Activated CD8-positive, alpha-beta T cell treated with anti-CD3 and anti-CD28 coated beads, Interleukin-2, amount 10 ng/mL, durations not matched to agents 7 days and 5 days (primary cell): ENCODE measurements at regions of chr1 and their contacts with region 1.

Region 1: DNA sequence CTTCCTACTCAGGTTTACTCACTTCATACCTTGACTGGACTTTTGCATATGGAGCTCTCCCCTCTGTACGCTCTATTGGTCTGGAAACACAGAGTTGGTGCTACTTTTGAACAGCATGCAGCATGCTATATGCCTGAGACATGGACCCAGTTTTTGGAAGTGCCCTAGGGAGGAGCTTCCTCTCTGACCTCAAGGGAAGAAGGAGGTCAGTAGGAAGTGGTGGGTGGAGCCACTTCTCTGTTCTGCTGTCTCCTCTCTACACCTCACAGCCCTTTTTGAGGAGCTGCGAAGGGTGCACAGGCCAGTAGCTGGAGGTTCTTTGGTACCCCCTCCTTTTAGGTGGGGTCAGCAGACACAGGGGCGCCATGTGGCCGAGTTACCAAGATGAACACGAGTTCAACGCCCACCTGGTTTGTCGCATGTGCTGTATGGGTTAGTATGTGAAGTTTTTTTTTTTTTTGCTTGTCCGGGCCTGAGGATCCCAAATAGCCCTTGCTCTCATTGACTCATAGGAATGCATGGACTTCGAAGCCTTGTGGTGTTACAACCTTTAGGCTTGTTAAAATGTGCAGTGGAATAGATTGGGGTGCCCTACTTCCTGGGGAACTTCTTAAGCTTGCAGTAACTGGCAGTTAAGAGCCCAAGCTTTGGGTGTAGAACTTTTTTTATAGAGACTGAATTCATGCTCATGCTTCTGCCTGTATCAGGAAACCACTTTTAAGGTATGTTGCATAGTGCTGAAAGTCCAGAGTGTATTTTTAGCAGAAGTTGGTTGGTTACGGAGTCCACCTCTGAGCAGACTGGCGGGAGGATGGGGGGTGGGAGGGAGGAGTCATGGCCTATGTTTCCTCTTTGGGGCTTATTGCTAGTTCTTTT is 10.7 kb downstream of the MACF1 start:
- DNase-seq: peak; percentile 69
- ATAC-seq: peak; percentile 78
- H3K4me3 Mint-ChIP-seq: peak overlapping the region; percentile 89
- H3K27ac Mint-ChIP-seq: peak overlapping the region; percentile 90
- H3K4me1 Mint-ChIP-seq: peaks cover 51% of the 10 kb centered on the region
- H3K27me3 Mint-ChIP-seq: no peaks in the 10 kb centered on the region

Region 2: GRCh38 chr1:39204441-39205081 is 10.7 kb before region 1 on chr1 and contains the start of gene MACF1:
- CTCF ChIA-PET with region 1: interaction called, 89 read pairs
- POLR2A ChIA-PET with region 1: interaction called, 117 read pairs
- DNase-seq: peak; percentile 58
- ATAC-seq: peak; percentile 61
- H3K4me3 Mint-ChIP-seq: peak within 1 kb of the TSS; percentile 93
- H3K27ac Mint-ChIP-seq: peak within 1 kb of the TSS; percentile 93
- H3K4me1 Mint-ChIP-seq: peaks cover 53% of the 10 kb centered on the region
- H3K27me3 Mint-ChIP-seq: no peaks in the 10 kb centered on the region
- total RNA-seq, gene MACF1: 353 to 366 TPM

Region 3: DNA sequence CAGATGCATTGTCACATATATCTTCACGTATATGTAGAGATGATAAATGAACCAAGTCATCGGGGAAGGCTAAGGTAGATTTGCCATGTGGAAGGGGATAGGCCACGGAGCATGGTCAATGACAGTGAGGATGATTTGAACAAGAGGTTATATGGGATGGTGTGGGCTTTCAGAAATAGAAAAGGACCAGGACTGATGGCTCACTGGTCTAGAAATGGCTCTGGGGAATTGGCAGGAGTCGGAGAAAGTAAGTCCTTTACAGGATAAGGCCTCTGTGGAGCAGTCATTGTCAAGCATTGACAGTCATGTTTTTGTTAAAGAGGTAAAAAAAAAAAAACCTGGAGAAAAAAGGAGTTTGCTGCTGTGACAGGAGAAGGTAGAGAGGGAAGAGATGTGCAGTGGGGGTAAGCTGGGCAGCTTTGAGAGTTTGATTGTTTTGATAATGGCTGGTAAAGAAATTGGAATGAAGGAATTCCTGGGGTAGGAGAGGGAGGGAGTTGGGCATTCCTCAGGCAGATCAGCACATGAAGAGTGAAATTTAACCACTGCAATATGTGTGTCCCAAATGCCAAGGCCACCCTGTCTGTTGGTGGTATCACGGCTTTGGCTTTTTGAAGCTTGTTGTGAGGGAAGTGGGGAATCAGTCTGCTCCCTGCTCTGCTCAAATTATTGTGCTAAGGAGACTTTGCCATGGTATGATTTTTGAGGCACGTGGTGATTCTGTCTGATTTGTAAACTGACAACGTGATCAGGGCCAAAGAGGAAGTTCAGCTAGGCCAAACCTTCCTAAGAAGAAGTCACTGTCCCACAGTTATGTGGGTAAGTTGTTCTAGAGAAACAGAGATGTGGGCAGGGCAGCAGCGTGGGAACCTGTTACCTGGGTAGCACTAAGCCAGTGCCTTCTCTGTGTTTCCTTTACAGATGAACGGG is 15.3 kb after region 1 on chr1:
- CTCF ChIA-PET with region 1: interaction called, 10 read pairs
- POLR2A ChIA-PET with region 1: no interaction called
- DNase-seq: peak; percentile 33
- ATAC-seq: peak; percentile 74
- H3K4me3 Mint-ChIP-seq: no peak overlapping the region
- H3K27ac Mint-ChIP-seq: peak overlapping the region; percentile 64
- H3K4me1 Mint-ChIP-seq: peaks cover 35% of the 10 kb centered on the region
- H3K27me3 Mint-ChIP-seq: no peaks in the 10 kb centered on the region

Region 4: DNA sequence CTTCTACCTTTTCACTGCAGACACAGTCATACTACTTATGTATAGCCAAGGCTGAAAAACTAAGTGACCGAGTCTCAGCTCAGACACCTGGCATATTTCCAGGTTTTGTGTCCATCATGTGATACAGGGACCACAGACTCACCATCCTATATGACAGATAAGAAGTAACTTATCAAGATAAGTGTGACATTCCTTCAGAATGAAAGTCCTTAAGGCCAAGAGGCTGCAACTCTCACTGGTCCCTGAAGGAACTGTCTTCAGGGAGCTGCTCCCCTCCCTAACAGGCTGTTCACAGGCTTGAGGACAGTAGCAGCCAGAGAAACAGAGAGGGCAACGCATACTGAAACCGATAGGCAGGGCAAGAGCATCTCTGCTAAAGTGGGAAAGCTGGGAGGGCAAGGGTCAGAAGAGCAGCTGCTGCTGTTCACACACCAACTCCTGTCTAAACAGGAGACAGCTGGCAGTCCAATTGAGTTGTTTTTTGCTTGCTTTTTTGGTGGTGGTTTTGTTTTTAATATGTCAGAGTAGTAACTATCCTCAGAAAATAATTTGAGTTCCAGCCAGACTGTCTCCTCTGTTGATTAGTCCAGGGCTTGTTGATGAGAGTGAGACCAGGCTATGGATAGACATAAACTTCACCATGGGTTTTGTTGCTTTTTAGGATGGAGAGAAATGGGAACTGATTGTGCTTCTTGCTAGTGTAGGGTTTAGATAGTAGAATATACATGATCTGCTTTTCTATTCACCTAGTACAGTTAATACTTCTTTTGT is 57.0 kb after region 1 on chr1:
- CTCF ChIA-PET with region 1: no interaction called
- POLR2A ChIA-PET with region 1: no interaction called
- DNase-seq: no peak
- ATAC-seq: no peak
- H3K4me3 Mint-ChIP-seq: no peak overlapping the region
- H3K27ac Mint-ChIP-seq: peak overlapping the region; percentile 19
- H3K4me1 Mint-ChIP-seq: peaks cover 34% of the 10 kb centered on the region
- H3K27me3 Mint-ChIP-seq: no peaks in the 10 kb centered on the region